CD8-positive, alpha-beta T cell (primary cell): ENCODE measurements at regions of chr12 and their contacts with region 1.

Region 1: GRCh38 chr12:92108651-92109050 is 37.0 kb downstream of the BTG1 start:
- DNase-seq: no peak
- ATAC-seq: no peak
- H3K4me3 ChIP-seq: no peak overlapping the region
- H3K4me3 Mint-ChIP-seq: peak overlapping the region; percentile 44
- H3K27ac ChIP-seq: no peak overlapping the region
- H3K27ac Mint-ChIP-seq: peak overlapping the region; percentile 89
- H3K4me1 ChIP-seq: peaks cover 85% of the 10 kb centered on the region
- H3K4me1 Mint-ChIP-seq: peaks cover 82% of the 10 kb centered on the region
- H3K27me3 ChIP-seq: no peaks in the 10 kb centered on the region
- H3K27me3 Mint-ChIP-seq: no peaks in the 10 kb centered on the region
- CTCF ChIP-seq: no peak

Region 2: GRCh38 chr12:92059976-92060375 is 48.7 kb before region 1 on chr12:
- CTCF ChIA-PET with region 1: no interaction called
- POLR2A ChIA-PET with region 1: no interaction called
- intact Hi-C with region 1: loop called in 1 of 2 experiments (anchors 5 kb)
- DNase-seq: no peak
- ATAC-seq: no peak
- H3K4me3 ChIP-seq: no peak overlapping the region
- H3K4me3 Mint-ChIP-seq: no peak overlapping the region
- H3K27ac ChIP-seq: no peak overlapping the region
- H3K27ac Mint-ChIP-seq: peak overlapping the region; percentile 6
- H3K4me1 ChIP-seq: peaks cover 41% of the 10 kb centered on the region
- H3K4me1 Mint-ChIP-seq: peaks cover 79% of the 10 kb centered on the region
- H3K27me3 ChIP-seq: no peaks in the 10 kb centered on the region
- H3K27me3 Mint-ChIP-seq: no peaks in the 10 kb centered on the region
- CTCF ChIP-seq: no peak

Region 3: DNA sequence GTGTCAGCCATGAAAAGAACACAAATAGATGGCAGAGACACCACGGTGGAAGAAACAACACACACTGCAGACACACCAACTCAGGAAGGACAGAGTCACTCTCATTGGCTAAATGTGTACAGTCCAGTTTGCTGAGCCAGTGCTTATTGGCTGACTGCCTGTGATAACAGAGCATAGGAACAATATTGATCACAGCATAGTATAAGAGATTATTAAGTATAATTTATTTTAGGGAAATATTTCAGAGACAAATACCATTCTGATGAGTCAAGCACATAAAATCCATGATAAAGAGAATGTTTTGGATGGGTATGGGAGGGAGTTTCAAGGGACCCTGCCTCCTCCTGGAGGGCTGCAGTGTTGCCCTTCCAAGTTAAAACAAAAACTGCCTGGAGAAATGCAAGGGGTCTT is 13.9 kb before region 1 on chr12:
- CTCF ChIA-PET with region 1: interaction called, 4 read pairs
- POLR2A ChIA-PET with region 1: no interaction called
- intact Hi-C with region 1: loop called in 1 of 2 experiments (anchors 2 kb)
- DNase-seq: no peak
- ATAC-seq: no peak
- H3K4me3 ChIP-seq: no peak overlapping the region
- H3K4me3 Mint-ChIP-seq: peak overlapping the region; percentile 13
- H3K27ac ChIP-seq: no peak overlapping the region
- H3K27ac Mint-ChIP-seq: no peak overlapping the region
- H3K4me1 ChIP-seq: peaks cover 33% of the 10 kb centered on the region
- H3K4me1 Mint-ChIP-seq: peaks cover 60% of the 10 kb centered on the region
- H3K27me3 ChIP-seq: no peaks in the 10 kb centered on the region
- H3K27me3 Mint-ChIP-seq: no peaks in the 10 kb centered on the region
- CTCF ChIP-seq: no peak

Region 4: DNA sequence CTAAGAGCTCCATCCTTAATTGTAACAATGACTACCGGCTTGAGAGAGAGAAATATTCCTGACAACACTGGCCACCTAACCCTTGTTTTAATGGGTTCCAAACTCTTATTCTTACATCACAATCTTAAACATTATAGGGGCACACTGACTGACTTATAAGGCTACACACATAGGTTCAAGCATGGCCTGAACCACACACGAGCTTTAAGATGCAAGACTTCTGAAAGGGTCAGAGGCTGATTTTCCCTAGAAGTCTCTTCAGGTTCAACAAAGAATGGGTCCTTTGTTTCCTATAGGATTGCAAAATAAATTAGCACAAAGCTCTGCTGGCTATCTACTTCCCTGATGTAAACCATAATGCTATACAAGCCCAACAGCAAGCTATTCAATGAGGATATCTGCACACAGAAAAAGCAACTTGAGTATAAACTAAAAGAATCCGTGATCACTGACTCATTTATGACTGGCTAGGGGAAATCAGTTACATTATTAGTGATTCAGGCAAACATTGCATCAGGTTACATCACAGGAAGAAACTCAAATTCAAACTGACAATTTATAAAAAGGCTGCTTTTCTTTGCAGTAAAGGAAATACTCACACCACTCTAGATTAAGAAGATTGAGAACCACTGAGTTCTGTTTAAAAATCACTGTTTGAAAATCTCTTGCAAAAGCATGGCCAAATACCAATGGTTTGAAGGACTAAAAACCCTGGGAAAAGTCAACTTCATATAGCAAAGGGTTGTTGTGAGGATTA is 28.5 kb after region 1 on chr12:
- CTCF ChIA-PET with region 1: no interaction called
- POLR2A ChIA-PET with region 1: interaction called, 7 read pairs
- intact Hi-C with region 1: loop called in 1 of 2 experiments (anchors 2 kb)
- DNase-seq: peak in 1 of 9 experiments; percentile 43
- ATAC-seq: no peak
- H3K4me3 ChIP-seq: peak overlapping the region; percentile 66 to 91
- H3K4me3 Mint-ChIP-seq: peak overlapping the region; percentile 96
- H3K27ac ChIP-seq: peak overlapping the region; percentile 45 to 92
- H3K27ac Mint-ChIP-seq: peak overlapping the region; percentile 99
- H3K4me1 ChIP-seq: peaks cover 47% of the 10 kb centered on the region
- H3K4me1 Mint-ChIP-seq: peaks cover 51% of the 10 kb centered on the region
- H3K27me3 ChIP-seq: no peaks in the 10 kb centered on the region
- H3K27me3 Mint-ChIP-seq: no peaks in the 10 kb centered on the region
- CTCF ChIP-seq: no peak

Region 5: GRCh38 chr12:92539113-92539749 is 430.6 kb after region 1 on chr12:
- CTCF ChIA-PET with region 1: no interaction called
- POLR2A ChIA-PET with region 1: no interaction called
- intact Hi-C with region 1: no loop called
- DNase-seq: peak in 2 of 9 experiments; percentile 51 to 67
- ATAC-seq: peak; percentile 73
- H3K4me3 ChIP-seq: no peak overlapping the region
- H3K4me3 Mint-ChIP-seq: no peak overlapping the region
- H3K27ac ChIP-seq: peak overlapping the region in 1 of 2 experiments; percentile 79
- H3K27ac Mint-ChIP-seq: peak overlapping the region; percentile 86
- H3K4me1 ChIP-seq: peaks cover 31% of the 10 kb centered on the region
- H3K4me1 Mint-ChIP-seq: peaks cover 56% of the 10 kb centered on the region
- H3K27me3 ChIP-seq: no peaks in the 10 kb centered on the region
- H3K27me3 Mint-ChIP-seq: no peaks in the 10 kb centered on the region
- CTCF ChIP-seq: no peak